ENCODE measurements at regions of chr7 and their contacts with region 1.

Region 1: DNA sequence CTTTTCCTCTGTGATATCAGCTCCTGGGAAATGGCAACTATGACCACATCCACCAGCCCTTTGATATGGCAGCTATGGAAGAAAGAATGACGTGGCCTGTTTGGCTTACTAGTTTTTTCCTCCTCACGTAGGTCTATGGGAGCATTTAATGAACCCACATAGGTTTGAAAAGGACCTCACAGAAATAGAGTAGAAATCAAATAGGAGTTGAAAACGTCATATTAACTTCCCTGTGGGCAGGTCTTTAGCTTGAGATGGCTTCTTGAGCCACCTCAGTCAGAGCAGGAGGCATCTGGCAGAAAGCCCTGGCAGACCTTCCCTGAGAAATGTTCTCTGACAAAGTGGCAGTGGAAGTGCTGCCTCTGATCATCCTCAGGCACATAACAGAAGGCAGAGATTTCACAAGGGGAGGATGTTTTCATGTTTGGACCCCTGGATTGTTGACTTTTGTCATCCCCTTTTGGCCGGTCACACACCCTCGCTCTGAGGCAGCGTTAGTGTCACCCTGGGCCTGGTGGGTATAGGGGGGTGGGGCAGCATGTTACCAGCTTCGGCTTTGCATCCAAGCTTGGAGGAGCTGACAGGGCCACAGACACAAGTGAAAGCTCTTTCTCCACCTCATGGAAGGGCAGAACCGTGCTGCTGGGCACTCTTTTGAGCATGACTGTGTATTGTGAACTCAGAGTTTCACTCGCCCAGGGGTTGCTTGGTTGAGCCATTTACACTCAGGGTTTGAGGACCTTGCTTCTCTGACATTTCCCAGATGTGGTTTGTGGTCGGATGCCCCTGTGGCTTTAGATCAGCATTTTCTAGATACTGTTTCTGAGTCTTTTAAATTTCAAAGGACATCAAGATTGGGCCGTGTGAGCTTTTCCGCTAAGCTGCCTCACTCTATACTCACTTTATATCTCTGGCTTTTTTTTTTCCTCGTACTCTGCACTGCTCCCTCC is 184.2 kb downstream of the STK31 start:
- DNase-seq: peak; percentile 24
- H3K4me3 Mint-ChIP-seq: peak overlapping the region; percentile 41
- H3K27ac Mint-ChIP-seq: peak overlapping the region; percentile 65
- H3K4me1 Mint-ChIP-seq: peaks cover 35% of the 10 kb centered on the region
- H3K27me3 Mint-ChIP-seq: peaks cover 9% of the 10 kb centered on the region

Region 2: GRCh38 chr7:23918856-23919255 is 24.6 kb after region 1 on chr7:
- intact Hi-C with region 1: no loop called
- DNase-seq: no peak
- H3K4me3 Mint-ChIP-seq: no peak overlapping the region
- H3K27ac Mint-ChIP-seq: no peak overlapping the region
- H3K4me1 Mint-ChIP-seq: no peaks in the 10 kb centered on the region
- H3K27me3 Mint-ChIP-seq: peaks cover 5% of the 10 kb centered on the region

Region 3: DNA sequence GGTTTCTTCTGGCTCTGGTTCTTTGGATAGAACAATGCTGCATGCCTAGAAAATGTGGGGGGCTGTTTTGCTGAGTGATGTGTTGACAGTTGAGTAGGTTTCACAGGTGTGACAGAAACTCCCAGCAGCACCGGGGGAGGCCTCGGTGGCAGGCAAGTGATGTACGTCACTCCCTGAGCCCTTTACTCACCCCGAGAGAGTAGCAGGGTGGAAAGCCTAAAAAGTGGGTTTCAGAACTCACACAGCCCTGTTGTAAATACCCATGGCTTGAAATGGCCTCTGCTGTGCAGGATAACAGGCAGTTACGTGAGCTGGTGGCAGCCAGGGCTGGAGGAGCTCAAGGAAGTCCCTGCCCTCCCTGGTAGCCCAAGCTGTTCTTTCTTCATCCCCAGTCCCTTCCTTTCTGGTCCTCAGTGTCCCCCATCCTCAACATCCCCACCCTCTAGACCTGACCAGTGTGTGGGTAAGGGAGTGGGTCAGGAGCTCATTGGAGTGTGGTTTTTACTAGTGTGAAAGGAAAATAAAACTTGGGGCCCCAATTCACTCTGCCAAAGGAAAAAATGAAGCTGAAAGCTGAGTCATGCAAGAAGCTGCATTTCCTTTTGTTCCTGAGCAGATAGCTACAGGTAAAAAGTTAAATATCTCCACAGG is 73.9 kb after region 1 on chr7:
- intact Hi-C with region 1: loop called (anchors 1 kb)
- DNase-seq: no peak
- H3K4me3 Mint-ChIP-seq: no peak overlapping the region
- H3K27ac Mint-ChIP-seq: peak overlapping the region; percentile 70
- H3K4me1 Mint-ChIP-seq: peaks cover 20% of the 10 kb centered on the region
- H3K27me3 Mint-ChIP-seq: no peaks in the 10 kb centered on the region

Region 4: DNA sequence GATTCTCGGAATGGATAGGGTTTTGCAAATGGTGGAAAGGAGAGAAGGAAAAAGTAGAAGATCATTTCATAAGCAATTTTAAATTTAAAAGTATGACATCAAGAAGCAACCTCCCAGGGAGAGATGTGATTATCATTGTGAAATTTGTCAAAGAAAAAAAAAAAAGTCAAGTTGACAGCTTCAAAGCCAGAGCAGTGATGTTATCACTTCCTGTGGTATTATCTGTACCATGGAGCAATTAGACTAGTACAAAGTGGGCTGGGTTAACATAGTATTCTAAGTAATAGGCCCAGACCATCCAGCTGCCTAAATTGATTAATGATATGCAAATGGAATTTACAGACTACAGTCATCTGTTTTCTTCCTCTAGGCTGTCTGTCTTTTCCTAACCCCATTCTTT is 305.8 kb after region 1 on chr7:
- intact Hi-C with region 1: no loop called
- DNase-seq: no peak
- H3K4me3 Mint-ChIP-seq: no peak overlapping the region
- H3K27ac Mint-ChIP-seq: no peak overlapping the region
- H3K4me1 Mint-ChIP-seq: no peaks in the 10 kb centered on the region
- H3K27me3 Mint-ChIP-seq: no peaks in the 10 kb centered on the region